WTC11 (cell line): ENCODE measurements at regions of chr7 and their contacts with region 1.

Region 1: DNA sequence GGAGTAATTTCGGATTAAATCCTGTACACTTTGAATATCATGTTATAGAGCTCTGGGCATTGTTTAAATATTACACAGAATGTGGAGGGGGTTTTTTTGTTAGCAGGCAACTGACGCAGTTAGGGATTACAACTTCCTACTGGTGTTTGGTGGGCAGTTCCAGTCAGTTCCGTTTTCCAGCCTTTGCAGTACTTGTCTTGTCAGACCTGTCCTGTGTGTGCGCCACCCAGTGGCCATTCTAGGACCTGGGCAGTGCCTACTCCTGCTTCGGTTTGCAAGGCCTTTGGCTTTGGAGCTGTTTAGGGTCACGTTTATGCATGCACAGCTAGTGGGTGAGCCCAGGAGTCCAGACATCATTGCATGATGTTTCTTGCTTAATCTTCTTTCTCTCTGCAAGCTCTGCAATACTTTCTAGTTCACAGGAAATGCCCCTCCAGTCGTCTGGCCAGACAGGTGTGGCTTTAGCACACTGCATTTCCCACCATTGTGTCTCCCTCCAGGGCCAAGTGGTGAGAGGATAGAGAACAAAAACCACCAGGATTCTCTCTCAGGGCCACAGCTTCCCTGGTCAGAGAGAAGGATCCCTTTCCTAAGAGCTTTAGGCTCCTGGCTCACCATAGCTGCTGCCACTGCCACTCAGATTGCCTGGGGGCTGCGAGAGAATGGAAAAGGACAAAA is 96.5 kb upstream of the TARP start:
- DNase-seq: peak; percentile 97
- ATAC-seq: peak; percentile 92
- H3K4me3 Mint-ChIP-seq: peak overlapping the region; percentile 10; the same call in 1 of the 2 replicates
- H3K27ac Mint-ChIP-seq: peak overlapping the region; percentile 24
- H3K4me1 Mint-ChIP-seq: peaks cover 17% of the 10 kb centered on the region
- H3K27me3 Mint-ChIP-seq: no peaks in the 10 kb centered on the region
- CTCF ChIP-seq: peak; percentile 77

Region 2: GRCh38 chr7:37916673-37917660 is 453.0 kb before region 1 on chr7 and contains the start of gene SFRP4:
- CTCF ChIA-PET with region 1: interaction called, 15 read pairs
- POLR2A ChIA-PET with region 1: no interaction called
- DNase-seq: peak; percentile 64
- ATAC-seq: peak; percentile 42
- H3K4me3 Mint-ChIP-seq: peak within 1 kb of the TSS; percentile 78
- H3K27ac Mint-ChIP-seq: no peak within 1 kb of the TSS
- H3K4me1 Mint-ChIP-seq: peaks cover 16% of the 10 kb centered on the region
- H3K27me3 Mint-ChIP-seq: peaks cover 84% of the 10 kb centered on the region
- CTCF ChIP-seq: no peak
- total RNA-seq, gene SFRP4: 0.07 to 0.24 TPM (median 0.09 TPM) in 3 replicates

Region 3: GRCh38 chr7:38107486-38107893 is 262.5 kb before region 1 on chr7:
- CTCF ChIA-PET with region 1: interaction called, 11 read pairs
- POLR2A ChIA-PET with region 1: no interaction called
- DNase-seq: peak; percentile 81
- ATAC-seq: peak; percentile 94
- H3K4me3 Mint-ChIP-seq: no peak overlapping the region
- H3K27ac Mint-ChIP-seq: no peak overlapping the region
- H3K4me1 Mint-ChIP-seq: 0 out of 2 replicates have a peak, but pooled peaks cover 7% of the 10 kb centered on the region
- H3K27me3 Mint-ChIP-seq: no peaks in the 10 kb centered on the region
- CTCF ChIP-seq: peak; percentile 74

Region 4: GRCh38 chr7:38318803-38319416 is 51.0 kb before region 1 on chr7:
- CTCF ChIA-PET with region 1: interaction called, 13 read pairs
- POLR2A ChIA-PET with region 1: no interaction called
- DNase-seq: peak; percentile 49
- ATAC-seq: peak; percentile 97
- H3K4me3 Mint-ChIP-seq: no peak overlapping the region
- H3K27ac Mint-ChIP-seq: peak overlapping the region; percentile 48
- H3K4me1 Mint-ChIP-seq: peaks cover 26% of the 10 kb centered on the region
- H3K27me3 Mint-ChIP-seq: no peaks in the 10 kb centered on the region; the same call in 1 of the 2 replicates
- CTCF ChIP-seq: no peak

Region 5: GRCh38 chr7:38398725-38399321 is 28.9 kb after region 1 on chr7:
- CTCF ChIA-PET with region 1: interaction called, 15 read pairs
- POLR2A ChIA-PET with region 1: no interaction called
- DNase-seq: peak; percentile 45
- ATAC-seq: peak; percentile 72
- H3K4me3 Mint-ChIP-seq: no peak overlapping the region
- H3K27ac Mint-ChIP-seq: no peak overlapping the region
- H3K4me1 Mint-ChIP-seq: peaks cover 3% of the 10 kb centered on the region; the same call in 1 of the 2 replicates
- H3K27me3 Mint-ChIP-seq: no peaks in the 10 kb centered on the region; the same call in 1 of the 2 replicates
- CTCF ChIP-seq: peak; percentile 76

Region 6: GRCh38 chr7:38411404-38411803 is 41.4 kb after region 1 on chr7:
- CTCF ChIA-PET with region 1: interaction called, 11 read pairs
- POLR2A ChIA-PET with region 1: no interaction called
- DNase-seq: no peak
- ATAC-seq: peak; percentile 93
- H3K4me3 Mint-ChIP-seq: no peak overlapping the region
- H3K27ac Mint-ChIP-seq: no peak overlapping the region
- H3K4me1 Mint-ChIP-seq: peaks cover 7% of the 10 kb centered on the region
- H3K27me3 Mint-ChIP-seq: no peaks in the 10 kb centered on the region
- CTCF ChIP-seq: peak; percentile 27; the same call in 1 of the 2 replicates

Region 7: GRCh38 chr7:38478404-38478803 is 108.4 kb after region 1 on chr7:
- CTCF ChIA-PET with region 1: no interaction called
- POLR2A ChIA-PET with region 1: no interaction called
- DNase-seq: no peak
- ATAC-seq: no peak
- H3K4me3 Mint-ChIP-seq: no peak overlapping the region
- H3K27ac Mint-ChIP-seq: no peak overlapping the region
- H3K4me1 Mint-ChIP-seq: peaks cover 2% of the 10 kb centered on the region; the same call in 1 of the 2 replicates
- H3K27me3 Mint-ChIP-seq: no peaks in the 10 kb centered on the region
- CTCF ChIP-seq: no peak

Region 8: GRCh38 chr7:38558761-38559345 is 188.9 kb after region 1 on chr7:
- CTCF ChIA-PET with region 1: no interaction called
- POLR2A ChIA-PET with region 1: no interaction called
- DNase-seq: no peak
- ATAC-seq: no peak
- H3K4me3 Mint-ChIP-seq: no peak overlapping the region
- H3K27ac Mint-ChIP-seq: no peak overlapping the region
- H3K4me1 Mint-ChIP-seq: peaks cover 7% of the 10 kb centered on the region
- H3K27me3 Mint-ChIP-seq: no peaks in the 10 kb centered on the region; the same call in 1 of the 2 replicates
- CTCF ChIP-seq: no peak